Uterus (tissue), 4 donors: ENCODE measurements at regions of chr17 and their contacts with region 1.

Region 1: DNA sequence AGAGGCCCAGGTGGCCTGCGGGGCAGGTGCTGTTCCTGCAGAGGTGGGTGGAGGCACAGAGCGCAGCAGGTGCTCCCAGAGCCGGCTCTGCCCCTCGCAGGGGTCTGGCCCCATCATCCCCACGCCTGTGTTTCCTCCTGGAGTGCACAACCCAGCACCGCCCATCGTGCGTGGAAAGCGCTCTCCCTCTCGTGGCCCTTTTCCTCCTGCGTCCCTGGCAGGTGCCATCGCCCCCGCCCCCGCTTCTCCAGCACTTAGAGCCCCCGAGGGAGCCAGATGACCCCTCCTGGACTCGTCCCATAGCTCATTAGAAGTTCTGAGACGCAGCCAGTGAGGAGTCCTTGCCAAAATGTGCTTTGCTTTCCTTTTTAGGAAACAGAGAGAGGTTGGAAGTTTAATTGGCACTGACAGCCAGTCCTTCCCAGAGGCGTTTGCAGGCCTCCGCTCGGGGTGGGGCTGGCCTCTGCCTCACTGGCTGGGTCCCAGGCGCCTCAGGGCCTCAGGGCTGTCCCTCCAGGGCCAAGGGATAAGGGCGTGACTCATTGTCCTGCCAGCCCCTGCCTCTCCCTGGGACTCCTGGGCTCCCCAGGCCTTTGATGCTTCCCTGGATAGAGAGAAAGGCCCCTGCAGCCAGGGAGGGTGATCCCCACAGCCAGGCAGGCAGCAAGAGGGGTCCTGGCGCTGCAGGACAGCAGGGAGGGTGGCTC is 32.2 kb upstream of the CHMP6 start:
- DNase-seq: peak; percentile 93 to 95
- H3K4me3 ChIP-seq: no peak overlapping the region
- H3K27ac ChIP-seq: peak overlapping the region; percentile 86 to 92
- H3K4me1 ChIP-seq: peaks cover 10 to 32% of the 10 kb centered on the region in 2 donors
- H3K27me3 ChIP-seq: no peaks in the 10 kb centered on the region
- CTCF ChIP-seq: peak; percentile 22 to 44 (median 28)
- POLR2A ChIP-seq: no peak

Region 2: GRCh38 chr17:80866147-80866793 is 93.2 kb before region 1 on chr17:
- intact Hi-C with region 1: loop called (anchors 10 kb)
- DNase-seq: peak; percentile 70 to 81
- H3K4me3 ChIP-seq: no peak overlapping the region
- H3K27ac ChIP-seq: no peak overlapping the region
- H3K4me1 ChIP-seq: no peaks in the 10 kb centered on the region
- H3K27me3 ChIP-seq: no peaks in the 10 kb centered on the region
- CTCF ChIP-seq: peak; percentile 64 to 73 (median 70)
- POLR2A ChIP-seq: no peak

Region 3: DNA sequence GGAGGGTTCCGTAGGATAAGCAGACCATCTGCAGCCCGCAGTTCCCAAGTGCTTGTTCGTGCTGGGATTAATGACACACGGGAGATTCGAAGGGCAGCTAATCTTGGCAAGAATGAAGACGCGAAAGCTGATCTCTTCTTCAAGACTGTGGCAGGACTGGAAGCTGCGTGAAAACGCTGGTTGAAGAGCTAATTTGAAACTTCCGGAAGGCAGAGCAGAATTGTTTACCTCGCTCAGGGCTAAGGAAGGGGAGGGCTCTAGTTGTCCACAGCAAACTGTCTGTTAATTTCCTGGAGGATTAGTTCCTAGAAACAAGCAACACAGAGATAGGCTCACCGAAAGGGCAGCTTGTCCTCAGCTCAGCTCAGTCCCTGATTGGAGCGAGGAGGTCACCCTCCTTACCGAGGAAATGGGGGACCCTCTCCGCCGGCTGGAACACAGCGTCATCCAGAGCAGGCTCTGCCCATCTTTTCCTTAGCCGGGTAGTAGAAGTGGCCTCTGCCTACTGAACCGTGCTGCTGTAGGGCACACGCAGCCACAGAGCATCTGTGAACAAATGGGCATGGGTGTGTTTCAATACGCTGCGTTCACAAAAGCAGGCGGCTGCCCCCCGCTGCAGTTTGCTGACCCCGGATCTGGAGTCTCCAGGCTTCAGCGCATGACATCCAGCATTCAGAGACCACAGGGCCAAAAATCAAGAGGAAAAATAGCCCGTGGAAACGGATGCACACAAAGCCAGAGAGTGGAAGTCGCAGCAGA is 58.7 kb after region 1 on chr17:
- intact Hi-C with region 1: no loop called
- DNase-seq: peak in 1 of 2 donors; percentile 29
- H3K4me3 ChIP-seq: peak overlapping the region in 1 of 2 donors; percentile 22
- H3K27ac ChIP-seq: peak overlapping the region; percentile 73 to 79
- H3K4me1 ChIP-seq: no peaks in the 10 kb centered on the region
- H3K27me3 ChIP-seq: no peaks in the 10 kb centered on the region
- CTCF ChIP-seq: no peak
- POLR2A ChIP-seq: peak in 1 of 2 donors; percentile 34